HepG2 (cell line): ENCODE measurements at regions of chr19 and their contacts with region 1.

Region 1: GRCh38 chr19:42794765-42795164 is 29.3 kb upstream of the PSG8 start:
- DNase-seq: no peak
- ATAC-seq: no peak
- H3K4me3 ChIP-seq: no peak overlapping the region
- H3K27ac ChIP-seq: no peak overlapping the region
- H3K4me1 ChIP-seq: no peaks in the 10 kb centered on the region
- H3K27me3 ChIP-seq: no peaks in the 10 kb centered on the region; a peak in 1 of 5 replicates
- CTCF ChIP-seq: no peak
- EP300 ChIP-seq: no peak
- POLR2A ChIP-seq: no peak
- RAD21 ChIP-seq: no peak

Region 2: GRCh38 chr19:42816894-42817293 is 22.1 kb after region 1 on chr19:
- CTCF ChIA-PET with region 1: no interaction called
- POLR2A ChIA-PET with region 1: no interaction called
- in situ Hi-C with region 1: no loop called
- intact Hi-C with region 1: no loop called
- DNase-seq: no peak
- ATAC-seq: no peak
- H3K4me3 ChIP-seq: no peak overlapping the region
- H3K27ac ChIP-seq: no peak overlapping the region
- H3K4me1 ChIP-seq: no peaks in the 10 kb centered on the region
- H3K27me3 ChIP-seq: no peaks in the 10 kb centered on the region; a peak in 1 of 5 replicates
- CTCF ChIP-seq: no peak
- EP300 ChIP-seq: no peak
- POLR2A ChIP-seq: no peak
- RAD21 ChIP-seq: no peak

Region 3: GRCh38 chr19:42881229-42881628 is 86.5 kb after region 1 on chr19:
- CTCF ChIA-PET with region 1: interaction called, 6 read pairs
- POLR2A ChIA-PET with region 1: no interaction called
- in situ Hi-C with region 1: no loop called
- intact Hi-C with region 1: loop called (anchors 10 kb)
- DNase-seq: no peak
- ATAC-seq: no peak
- H3K4me3 ChIP-seq: no peak overlapping the region
- H3K27ac ChIP-seq: no peak overlapping the region
- H3K4me1 ChIP-seq: no peaks in the 10 kb centered on the region
- H3K27me3 ChIP-seq: no peaks in the 10 kb centered on the region
- CTCF ChIP-seq: peak; percentile 52
- EP300 ChIP-seq: no peak
- POLR2A ChIP-seq: no peak
- RAD21 ChIP-seq: no peak